GM12878 (cell line): ENCODE measurements at regions of chr19 and their contacts with region 1.

Region 1: GRCh38 chr19:39970675-39971379 is at the start of gene PSMC4:
- DNase-seq: peak; percentile 99
- ATAC-seq: peak; percentile 98
- H3K4me3 ChIP-seq: peak within 1 kb of the TSS; percentile 93
- H3K27ac ChIP-seq: peak within 1 kb of the TSS; percentile 89
- H3K4me1 ChIP-seq: peaks cover 10% of the 10 kb centered on the region; the same call in 1 of the 2 replicates
- H3K27me3 ChIP-seq: no peaks in the 10 kb centered on the region
- CTCF ChIP-seq: peak; percentile 86 to 96 (median 87); a peak in 5 of 6 replicates
- EP300 ChIP-seq: no peak
- POLR2A ChIP-seq: peak; percentile 97
- RAD21 ChIP-seq: peak; percentile 85
- polyA plus RNA-seq, gene PSMC4: 203 to 328 TPM

Region 2: GRCh38 chr19:39671738-39672363 is 299.0 kb before region 1 on chr19:
- CTCF ChIA-PET with region 1: interaction called, 43 read pairs
- POLR2A ChIA-PET with region 1: interaction called, 7 read pairs
- RAD21 ChIA-PET with region 1: interaction called, 20 read pairs
- SMC1A ChIA-PET with region 1: interaction called, 23 read pairs
- in situ Hi-C with region 1: no loop called
- intact Hi-C with region 1: loop called (anchors 5 kb)
- DNase-seq: no peak
- ATAC-seq: peak; percentile 80
- H3K4me3 ChIP-seq: no peak overlapping the region
- H3K27ac ChIP-seq: no peak overlapping the region
- H3K4me1 ChIP-seq: peaks cover 15% of the 10 kb centered on the region
- H3K27me3 ChIP-seq: no peaks in the 10 kb centered on the region
- CTCF ChIP-seq: peak; percentile 42 to 80 (median 66); a peak in 5 of 6 replicates
- EP300 ChIP-seq: no peak
- POLR2A ChIP-seq: no peak
- RAD21 ChIP-seq: peak; percentile 99

Region 3: GRCh38 chr19:39833464-39834286 is 137.2 kb before region 1 on chr19 and contains the start of gene DYRK1B:
- CTCF ChIA-PET with region 1: interaction called, 4 read pairs
- POLR2A ChIA-PET with region 1: interaction called, 3 read pairs
- RAD21 ChIA-PET with region 1: interaction called, 12 read pairs
- SMC1A ChIA-PET with region 1: interaction called, 5 read pairs
- in situ Hi-C with region 1: no loop called
- intact Hi-C with region 1: no loop called
- DNase-seq: peak; percentile 92
- ATAC-seq: peak; percentile 98
- H3K4me3 ChIP-seq: peak within 1 kb of the TSS; percentile 97
- H3K27ac ChIP-seq: peak within 1 kb of the TSS; percentile 51
- H3K4me1 ChIP-seq: peaks cover 15% of the 10 kb centered on the region
- H3K27me3 ChIP-seq: no peaks in the 10 kb centered on the region
- CTCF ChIP-seq: no peak
- EP300 ChIP-seq: peak in 1 of 2 experiments; percentile 70; a peak in 2 of 4 replicates
- POLR2A ChIP-seq: peak; percentile 69
- RAD21 ChIP-seq: no peak
- polyA plus RNA-seq, gene DYRK1B: 0.07 TPM in 1 of 2 experiments, not detected in the other

Region 4: GRCh38 chr19:39889872-39890545 is 80.8 kb before region 1 on chr19:
- CTCF ChIA-PET with region 1: interaction called, 4 read pairs
- POLR2A ChIA-PET with region 1: no interaction called
- RAD21 ChIA-PET with region 1: interaction called, 7 read pairs
- SMC1A ChIA-PET with region 1: interaction called, 9 read pairs
- in situ Hi-C with region 1: no loop called
- intact Hi-C with region 1: loop called (anchors 10 kb)
- DNase-seq: no peak
- ATAC-seq: no peak
- H3K4me3 ChIP-seq: no peak overlapping the region
- H3K27ac ChIP-seq: no peak overlapping the region
- H3K4me1 ChIP-seq: no peaks in the 10 kb centered on the region
- H3K27me3 ChIP-seq: no peaks in the 10 kb centered on the region; a peak in 1 of 4 replicates
- CTCF ChIP-seq: no peak
- EP300 ChIP-seq: no peak
- POLR2A ChIP-seq: no peak
- RAD21 ChIP-seq: no peak

Region 5: GRCh38 chr19:39927524-39928356 is 43.1 kb before region 1 on chr19:
- CTCF ChIA-PET with region 1: interaction called, 14 read pairs
- POLR2A ChIA-PET with region 1: interaction called, 3 read pairs
- RAD21 ChIA-PET with region 1: interaction called, 7 read pairs
- SMC1A ChIA-PET with region 1: interaction called, 13 read pairs
- in situ Hi-C with region 1: no loop called
- intact Hi-C with region 1: no loop called
- DNase-seq: no peak
- ATAC-seq: no peak
- H3K4me3 ChIP-seq: no peak overlapping the region
- H3K27ac ChIP-seq: no peak overlapping the region
- H3K4me1 ChIP-seq: no peaks in the 10 kb centered on the region
- H3K27me3 ChIP-seq: no peaks in the 10 kb centered on the region
- CTCF ChIP-seq: no peak
- EP300 ChIP-seq: no peak
- POLR2A ChIP-seq: no peak
- RAD21 ChIP-seq: no peak

Region 6: GRCh38 chr19:39951686-39952085 is 19.1 kb before region 1 on chr19:
- CTCF ChIA-PET with region 1: interaction called, 43 read pairs
- POLR2A ChIA-PET with region 1: interaction called, 32 read pairs
- RAD21 ChIA-PET with region 1: interaction called, 50 read pairs
- SMC1A ChIA-PET with region 1: interaction called, 115 read pairs
- in situ Hi-C with region 1: no loop called
- intact Hi-C with region 1: no loop called
- DNase-seq: no peak
- ATAC-seq: no peak
- H3K4me3 ChIP-seq: no peak overlapping the region
- H3K27ac ChIP-seq: no peak overlapping the region
- H3K4me1 ChIP-seq: peaks cover 12% of the 10 kb centered on the region
- H3K27me3 ChIP-seq: no peaks in the 10 kb centered on the region
- CTCF ChIP-seq: no peak
- EP300 ChIP-seq: no peak
- POLR2A ChIP-seq: no peak
- RAD21 ChIP-seq: no peak

Region 7: DNA sequence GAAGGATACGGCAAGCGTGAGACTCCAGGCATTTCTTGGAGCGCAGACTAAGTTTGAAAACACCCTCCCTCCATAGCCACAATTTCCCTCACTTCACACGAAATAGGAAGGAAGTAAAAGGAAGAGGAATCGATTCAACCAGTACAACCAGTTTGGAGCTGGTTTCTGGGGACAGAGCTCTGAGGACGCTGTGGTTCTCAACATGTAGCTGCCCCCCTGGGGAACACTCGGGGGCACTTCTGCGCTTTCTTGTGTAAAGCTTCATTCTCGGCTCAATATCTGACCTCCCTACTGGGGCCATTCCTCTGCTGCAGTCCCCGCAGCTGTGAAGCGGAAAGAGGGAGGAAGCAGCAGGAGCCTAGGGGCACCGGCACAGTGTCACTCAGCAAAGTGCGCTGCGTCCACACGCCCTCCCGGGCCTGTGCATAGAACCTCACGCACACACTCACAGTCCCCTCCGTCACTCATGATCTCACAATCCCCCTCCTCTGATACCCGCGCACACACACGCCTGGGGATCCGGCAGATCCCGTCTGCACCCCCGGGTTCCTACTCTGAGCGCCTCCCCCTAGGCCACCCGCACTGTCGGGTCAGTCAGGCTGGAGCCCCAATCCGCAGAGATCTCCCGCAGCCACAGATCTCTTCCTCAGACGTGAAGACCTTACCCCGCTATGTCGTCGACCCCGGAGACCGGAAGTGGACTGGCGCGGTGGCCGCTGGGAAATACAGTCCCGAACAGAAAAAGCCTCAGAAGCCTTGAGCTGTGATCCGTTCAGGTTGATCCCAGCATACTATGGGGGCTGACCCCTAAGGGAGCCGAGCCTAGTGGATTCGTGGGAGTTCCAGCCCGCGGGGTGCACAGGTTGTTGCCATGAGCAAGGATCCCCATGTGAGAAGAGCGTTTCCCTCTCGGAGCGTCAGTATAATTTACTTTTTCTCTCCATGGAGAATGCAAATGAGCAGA is 119.7 kb after region 1 on chr19 and contains the start of gene ZNF780A:
- CTCF ChIA-PET with region 1: interaction called, 4 read pairs
- POLR2A ChIA-PET with region 1: interaction called, 7 read pairs
- RAD21 ChIA-PET with region 1: interaction called, 13 read pairs
- SMC1A ChIA-PET with region 1: interaction called, 7 read pairs
- in situ Hi-C with region 1: no loop called
- intact Hi-C with region 1: no loop called
- DNase-seq: peak; percentile 48
- ATAC-seq: peak; percentile 94
- H3K4me3 ChIP-seq: peak within 1 kb of the TSS; percentile 95
- H3K27ac ChIP-seq: peak within 1 kb of the TSS; percentile 77
- H3K4me1 ChIP-seq: peaks cover 4% of the 10 kb centered on the region; the same call in 1 of the 2 replicates
- H3K27me3 ChIP-seq: no peaks in the 10 kb centered on the region
- CTCF ChIP-seq: no peak
- EP300 ChIP-seq: peak in 1 of 2 experiments; percentile 33; a peak in 1 of 4 replicates
- POLR2A ChIP-seq: peak; percentile 90
- RAD21 ChIP-seq: no peak
- polyA plus RNA-seq, gene ZNF780A: 19.6 to 27.6 TPM